Transverse colon (tissue), 4 donors: ENCODE measurements at regions of chr21 and their contacts with region 1.

Region 1: DNA sequence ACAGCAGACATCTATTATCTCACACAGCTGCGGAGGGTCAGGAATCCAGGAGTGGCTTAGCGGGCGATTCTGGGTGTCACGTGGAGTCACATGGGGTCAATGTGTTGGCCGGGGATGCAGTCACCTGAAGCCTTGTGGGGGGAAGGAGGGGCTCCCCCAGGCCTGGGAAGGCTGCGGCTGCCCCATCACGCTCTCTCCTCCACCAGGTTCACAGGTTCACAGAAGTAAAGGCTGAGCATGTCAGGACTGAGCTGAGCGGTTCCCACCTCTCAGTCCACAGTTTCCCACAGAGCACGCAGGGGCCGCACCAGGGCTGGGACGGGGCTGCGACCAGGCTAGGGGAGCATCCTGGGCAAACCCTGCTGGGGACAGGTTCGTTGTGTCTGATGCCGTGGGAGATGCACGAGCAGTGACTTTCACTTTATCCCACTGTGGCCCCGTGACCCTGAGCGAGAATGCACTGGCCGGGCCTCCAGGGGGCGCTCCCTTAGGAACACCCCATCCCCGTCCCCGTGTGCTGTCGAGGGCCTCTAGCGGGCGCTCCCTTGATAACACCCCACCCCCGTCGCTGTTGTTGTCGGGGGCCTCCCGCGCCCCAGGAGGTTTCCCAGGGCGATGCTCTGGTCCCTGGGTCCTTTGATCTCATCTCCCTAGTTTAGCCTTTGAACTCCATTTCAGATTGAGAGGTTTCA is 73.2 kb upstream of the TRAPPC10 start:
- DNase-seq: peak; percentile 87
- H3K4me3 ChIP-seq: peak overlapping the region in 3 of 4 donors; percentile 17 to 38 (median 37)
- H3K27ac ChIP-seq: peak overlapping the region in 3 of 4 donors; percentile 24 to 50 (median 27)
- H3K4me1 ChIP-seq: peaks cover 0 to 11% (median 8%) of the 10 kb centered on the region in 4 donors
- H3K27me3 ChIP-seq: no peaks in the 10 kb centered on the region
- CTCF ChIP-seq: peak; percentile 85 to 97 (median 95)
- EP300 ChIP-seq: no peak
- POLR2A ChIP-seq: no peak

Region 2: GRCh38 chr21:43287111-43287759 is 651.7 kb before region 1 on chr21:
- in situ Hi-C with region 1: no loop called
- intact Hi-C with region 1: no loop called
- DNase-seq: peak; percentile 60
- H3K4me3 ChIP-seq: no peak overlapping the region
- H3K27ac ChIP-seq: peak overlapping the region in 3 of 4 donors; percentile 17 to 45 (median 38)
- H3K4me1 ChIP-seq: no peaks in the 10 kb centered on the region
- H3K27me3 ChIP-seq: no peaks in the 10 kb centered on the region
- CTCF ChIP-seq: no peak
- EP300 ChIP-seq: peak; percentile 61
- POLR2A ChIP-seq: no peak

Region 3: DNA sequence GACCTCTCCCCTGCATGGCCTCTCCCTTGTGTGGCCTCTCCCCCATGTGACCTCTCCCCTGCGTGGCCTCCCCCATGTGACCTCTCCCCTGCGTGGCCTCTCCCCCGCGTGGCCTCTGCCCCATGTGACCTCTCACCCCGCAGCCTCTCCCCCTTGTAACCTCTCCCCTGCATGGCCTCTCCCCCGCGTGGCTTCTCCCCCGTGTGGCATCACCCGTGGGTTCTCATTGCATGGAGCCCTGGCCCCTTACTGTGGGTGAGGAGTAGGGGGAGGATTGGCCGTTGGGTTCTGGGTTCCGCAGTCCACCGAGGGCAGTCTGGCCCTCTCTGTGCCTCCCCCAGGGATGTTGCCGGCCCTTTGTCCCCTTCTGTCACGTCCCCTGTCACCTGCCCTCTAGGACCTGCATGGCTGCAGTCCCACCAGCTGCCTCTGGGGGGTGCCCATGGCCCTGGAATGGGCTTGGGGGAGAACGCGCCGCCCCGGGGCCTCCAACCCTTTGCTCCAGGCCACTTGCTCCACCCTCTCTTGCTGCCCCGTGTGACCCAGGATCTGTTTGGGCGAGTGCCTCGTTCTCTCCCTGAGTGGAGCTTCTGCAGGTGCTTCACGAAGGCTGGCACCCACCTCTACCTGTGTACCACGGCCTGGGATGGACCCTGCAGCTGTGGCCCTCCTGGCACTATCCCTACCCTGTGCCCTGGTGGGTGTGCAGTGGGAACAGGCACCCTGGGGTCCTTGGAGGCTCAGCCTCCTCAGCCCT is 128.2 kb before region 1 on chr21:
- in situ Hi-C with region 1: loop called in 1 of 4 experiments (anchors 25 kb)
- intact Hi-C with region 1: no loop called
- DNase-seq: peak; percentile 93
- H3K4me3 ChIP-seq: peak overlapping the region in 1 of 4 donors; percentile 9
- H3K27ac ChIP-seq: peak overlapping the region in 1 of 4 donors; percentile 54
- H3K4me1 ChIP-seq: peaks cover 7 to 36% (median 27%) of the 10 kb centered on the region in 4 donors
- H3K27me3 ChIP-seq: no peaks in the 10 kb centered on the region
- CTCF ChIP-seq: peak; percentile 93 to 98 (median 96)
- EP300 ChIP-seq: no peak
- POLR2A ChIP-seq: no peak

Region 4: GRCh38 chr21:43825681-43826622 is 112.9 kb before region 1 on chr21:
- in situ Hi-C with region 1: loop called in 2 of 4 experiments (anchors 25 kb)
- intact Hi-C with region 1: no loop called
- DNase-seq: no peak
- H3K4me3 ChIP-seq: no peak overlapping the region
- H3K27ac ChIP-seq: no peak overlapping the region
- H3K4me1 ChIP-seq: peaks cover 0 to 5% (median 0%) of the 10 kb centered on the region in 4 donors
- H3K27me3 ChIP-seq: peaks cover 40% of the 10 kb centered on the region
- CTCF ChIP-seq: peak in 1 of 5 experiments; percentile 14
- EP300 ChIP-seq: no peak
- POLR2A ChIP-seq: no peak

Region 5: DNA sequence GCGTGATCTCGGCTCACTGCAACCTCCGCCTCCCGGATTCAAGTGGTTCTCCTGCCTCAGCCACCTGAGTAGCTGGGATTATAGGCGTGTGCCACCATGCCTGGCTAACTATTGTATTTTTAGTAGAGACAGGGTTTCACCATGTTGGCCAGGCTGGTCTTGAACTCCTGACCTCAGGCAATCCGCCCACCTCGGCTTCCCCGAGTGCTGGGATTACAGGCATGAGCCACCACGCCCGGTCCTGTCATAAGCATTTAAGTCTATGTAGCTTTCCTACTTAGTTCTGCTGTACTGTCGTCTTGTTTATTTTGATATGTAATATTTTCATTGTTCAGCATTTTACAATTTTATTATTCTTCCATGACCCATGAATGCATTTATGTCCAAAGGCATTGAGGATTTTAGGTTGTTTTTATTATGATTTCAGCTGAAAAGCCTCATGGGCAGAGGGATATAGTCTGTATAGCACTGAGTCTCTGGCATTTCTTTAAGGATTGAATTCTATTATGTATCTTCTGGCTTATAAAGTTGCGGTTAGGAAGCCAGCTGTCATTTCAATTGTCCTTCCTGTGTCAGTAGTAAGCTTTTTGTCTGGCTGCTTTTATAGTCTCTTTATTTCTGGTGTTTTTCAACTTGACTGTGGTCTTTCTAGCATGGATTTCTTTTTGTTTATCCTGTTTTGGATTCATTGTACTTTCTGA is 64.7 kb before region 1 on chr21:
- in situ Hi-C with region 1: no loop called
- intact Hi-C with region 1: loop called (anchors 5 kb)
- DNase-seq: no peak
- H3K4me3 ChIP-seq: no peak overlapping the region
- H3K27ac ChIP-seq: no peak overlapping the region
- H3K4me1 ChIP-seq: peaks cover 0 to 4% (median 0%) of the 10 kb centered on the region in 4 donors
- H3K27me3 ChIP-seq: no peaks in the 10 kb centered on the region
- CTCF ChIP-seq: no peak
- EP300 ChIP-seq: no peak
- POLR2A ChIP-seq: no peak

Region 6: DNA sequence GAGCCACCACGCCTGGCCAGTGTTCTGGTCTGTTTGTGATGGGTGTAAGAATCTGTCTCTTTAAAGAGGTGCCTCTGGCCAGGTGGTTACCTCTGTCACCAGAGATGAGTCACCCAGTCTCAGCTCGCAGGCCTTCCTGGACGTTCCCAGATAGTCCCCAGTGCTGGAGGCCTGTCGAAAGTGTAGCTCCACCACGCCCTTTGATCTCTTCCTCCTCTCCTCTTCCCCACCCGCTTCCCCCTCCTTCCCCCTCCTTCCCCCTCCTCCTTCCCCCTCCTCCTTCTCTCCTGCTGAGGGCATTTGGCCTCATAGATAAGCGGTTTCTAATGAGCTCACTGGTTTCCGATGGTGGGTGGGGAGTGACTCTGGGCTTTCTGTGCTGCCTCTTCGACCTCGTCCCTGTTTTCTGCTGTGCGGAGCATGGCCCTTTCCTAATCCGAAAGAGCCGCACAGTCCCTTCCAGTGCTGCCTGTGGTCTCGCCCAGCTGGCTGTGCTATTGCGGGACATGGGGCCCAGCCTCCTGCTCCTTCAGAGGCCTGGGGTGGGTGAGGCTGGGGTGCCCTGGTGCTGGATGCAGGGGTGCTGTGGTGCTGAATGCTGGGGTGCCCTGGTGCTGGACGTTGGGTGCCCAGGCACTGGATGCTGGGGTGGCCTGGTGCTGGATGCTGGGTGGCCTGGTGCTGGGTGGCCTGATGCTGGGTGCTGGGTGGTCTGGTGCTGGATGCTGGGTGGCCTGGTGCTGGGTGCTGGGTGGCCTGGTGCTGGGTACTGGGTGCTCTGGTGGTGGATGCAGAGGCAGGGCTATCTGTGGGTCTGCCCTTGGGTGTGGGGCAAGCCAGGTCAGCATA is 54.7 kb before region 1 on chr21:
- in situ Hi-C with region 1: no loop called
- intact Hi-C with region 1: no loop called
- DNase-seq: peak; percentile 83
- H3K4me3 ChIP-seq: no peak overlapping the region
- H3K27ac ChIP-seq: peak overlapping the region; percentile 51 to 80 (median 74)
- H3K4me1 ChIP-seq: peaks cover 9 to 52% (median 29%) of the 10 kb centered on the region in 4 donors
- H3K27me3 ChIP-seq: no peaks in the 10 kb centered on the region
- CTCF ChIP-seq: no peak
- EP300 ChIP-seq: no peak
- POLR2A ChIP-seq: no peak

Region 7: GRCh38 chr21:44000360-44000759 is 61.5 kb after region 1 on chr21:
- in situ Hi-C with region 1: no loop called
- intact Hi-C with region 1: no loop called
- DNase-seq: no peak
- H3K4me3 ChIP-seq: no peak overlapping the region
- H3K27ac ChIP-seq: no peak overlapping the region
- H3K4me1 ChIP-seq: no peaks in the 10 kb centered on the region
- H3K27me3 ChIP-seq: no peaks in the 10 kb centered on the region
- CTCF ChIP-seq: no peak
- EP300 ChIP-seq: no peak
- POLR2A ChIP-seq: no peak

Region 8: GRCh38 chr21:45281411-45282282 is 1342.8 kb after region 1 on chr21:
- in situ Hi-C with region 1: no loop called
- intact Hi-C with region 1: no loop called
- DNase-seq: peak; percentile 6
- H3K4me3 ChIP-seq: no peak overlapping the region
- H3K27ac ChIP-seq: no peak overlapping the region
- H3K4me1 ChIP-seq: peaks cover 1 to 5% (median 3%) of the 10 kb centered on the region in 4 donors
- H3K27me3 ChIP-seq: no peaks in the 10 kb centered on the region
- CTCF ChIP-seq: no peak
- EP300 ChIP-seq: no peak
- POLR2A ChIP-seq: no peak